Gastrocnemius medialis (tissue), 4 donors: ENCODE measurements at regions of chr14 and their contacts with region 1.

Region 1: DNA sequence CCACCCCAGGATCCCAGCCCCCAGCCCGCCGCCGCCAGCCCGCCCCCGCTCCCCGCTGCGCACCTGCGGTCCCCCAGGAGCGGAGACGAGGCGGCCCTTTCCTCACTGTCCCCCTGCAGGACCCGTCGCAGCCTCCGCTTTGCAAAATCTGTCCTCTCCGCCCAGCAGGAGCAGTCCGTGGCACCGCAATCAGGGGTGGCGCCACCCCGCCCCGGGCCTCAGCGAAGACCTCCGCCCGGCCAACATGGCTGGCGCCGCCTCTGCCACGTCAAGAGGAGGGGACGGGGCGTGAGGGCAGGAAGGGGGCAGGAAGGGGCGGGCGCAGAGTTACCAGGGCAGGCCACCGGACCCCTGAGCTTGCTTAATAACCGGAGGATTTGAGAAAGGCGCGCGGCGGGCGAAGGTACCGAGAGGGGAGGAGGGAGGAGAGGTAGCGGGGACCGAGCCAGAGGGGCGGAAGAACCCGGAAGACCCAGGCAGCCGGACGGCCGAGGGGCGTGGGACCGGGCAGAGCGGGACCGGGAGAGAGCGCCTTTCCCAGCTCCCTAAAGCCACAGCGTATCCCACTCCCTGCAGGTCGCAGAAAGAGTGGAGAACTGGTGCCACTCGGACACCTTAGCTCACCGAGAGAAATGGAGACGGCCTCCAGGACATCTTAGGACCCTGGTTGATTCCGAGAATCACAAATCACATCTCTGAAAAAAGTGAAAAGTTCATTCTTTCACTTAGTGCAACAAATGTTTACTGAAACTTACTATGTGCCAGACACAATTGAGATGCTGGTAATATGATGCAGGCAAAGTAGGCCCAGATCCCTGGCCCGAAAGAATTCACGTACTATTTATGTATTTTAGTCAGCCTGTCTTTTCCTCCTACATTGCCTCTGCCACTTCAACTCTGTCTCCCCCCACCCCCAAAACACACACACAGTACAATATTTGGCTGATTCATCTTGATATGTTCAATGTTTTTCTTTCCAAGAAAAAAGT is at the start of gene SEC23A:
- DNase-seq: peak; percentile 79 to 90
- ATAC-seq: peak; percentile 93 to 94
- H3K4me3 ChIP-seq: peak within 1 kb of the TSS; percentile 69 to 88 (median 77)
- H3K27ac ChIP-seq: peak within 1 kb of the TSS; percentile 84 to 97 (median 95)
- H3K4me1 ChIP-seq: peaks cover 6 to 23% of the 10 kb centered on the region in 2 donors
- H3K27me3 ChIP-seq: no peaks in the 10 kb centered on the region
- CTCF ChIP-seq: no peak
- POLR2A ChIP-seq: peak; percentile 84
- total RNA-seq, gene SEC23A: 79.9 to 183 (median 93.9) TPM

Region 2: GRCh38 chr14:39114073-39114838 is 11.0 kb after region 1 on chr14 and contains the start of gene GEMIN2:
- in situ Hi-C with region 1: no loop called
- intact Hi-C with region 1: loop called (anchors 1 kb)
- DNase-seq: peak; percentile 84 to 92
- ATAC-seq: peak; percentile 100
- H3K4me3 ChIP-seq: peak within 1 kb of the TSS; percentile 71 to 93 (median 76)
- H3K27ac ChIP-seq: peak within 1 kb of the TSS; percentile 76 to 81 (median 78)
- H3K4me1 ChIP-seq: peaks cover 11 to 13% of the 10 kb centered on the region in 2 donors
- H3K27me3 ChIP-seq: no peaks in the 10 kb centered on the region
- CTCF ChIP-seq: no peak
- POLR2A ChIP-seq: peak in 1 of 2 donors; percentile 27
- total RNA-seq, gene GEMIN2: 17.7 to 28.0 (median 22.7) TPM

Region 3: DNA sequence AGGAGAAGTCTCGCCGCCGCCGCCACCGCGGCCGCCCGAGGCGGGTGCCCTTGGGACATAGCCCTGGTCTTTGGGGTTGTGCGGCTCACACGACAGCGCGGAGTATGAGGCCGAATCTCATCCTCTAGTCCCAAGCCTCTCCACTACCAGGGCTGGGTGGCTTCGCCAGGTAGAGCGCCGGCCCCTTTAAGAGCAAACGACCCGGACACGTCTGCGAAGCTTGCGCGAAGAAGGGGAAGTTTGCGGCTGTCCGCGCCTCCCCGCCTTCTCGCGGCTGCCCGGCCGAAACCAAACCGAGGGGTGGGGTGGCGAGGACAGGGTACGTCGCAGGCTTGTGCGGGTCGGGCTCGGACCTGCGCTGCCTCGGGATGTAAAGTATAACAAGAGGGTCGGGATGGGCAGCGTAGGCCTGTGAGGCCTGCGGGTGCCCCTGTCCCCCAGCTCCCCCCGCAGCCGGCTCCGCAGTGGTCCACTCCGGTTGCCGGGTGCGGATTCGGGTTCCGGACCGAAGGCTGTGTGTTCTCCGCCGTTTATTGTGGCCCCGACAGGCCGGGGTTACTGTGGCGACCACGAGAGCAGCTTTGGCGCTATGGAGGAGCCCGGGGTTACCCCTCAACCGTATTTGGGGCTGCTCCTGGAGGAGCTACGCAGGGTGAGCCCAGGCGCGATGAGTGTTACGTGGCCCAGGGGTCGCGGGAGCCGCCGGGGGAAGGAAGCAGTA is 163.8 kb after region 1 on chr14:
- in situ Hi-C with region 1: no loop called
- intact Hi-C with region 1: loop called (anchors 1 kb)
- DNase-seq: peak; percentile 71 to 82
- ATAC-seq: peak; percentile 83 to 88
- H3K4me3 ChIP-seq: peak overlapping the region; percentile 77 to 97 (median 91)
- H3K27ac ChIP-seq: peak overlapping the region; percentile 95 to 99 (median 98)
- H3K4me1 ChIP-seq: peaks cover 27 to 33% of the 10 kb centered on the region in 2 donors
- H3K27me3 ChIP-seq: no peaks in the 10 kb centered on the region
- CTCF ChIP-seq: peak in 2 of 5 experiments; percentile 17 to 26
- POLR2A ChIP-seq: peak; percentile 70 to 77